Heart right ventricle (tissue), 16 donors: ENCODE measurements at regions of chr9 and their contacts with region 1.

Region 1: DNA sequence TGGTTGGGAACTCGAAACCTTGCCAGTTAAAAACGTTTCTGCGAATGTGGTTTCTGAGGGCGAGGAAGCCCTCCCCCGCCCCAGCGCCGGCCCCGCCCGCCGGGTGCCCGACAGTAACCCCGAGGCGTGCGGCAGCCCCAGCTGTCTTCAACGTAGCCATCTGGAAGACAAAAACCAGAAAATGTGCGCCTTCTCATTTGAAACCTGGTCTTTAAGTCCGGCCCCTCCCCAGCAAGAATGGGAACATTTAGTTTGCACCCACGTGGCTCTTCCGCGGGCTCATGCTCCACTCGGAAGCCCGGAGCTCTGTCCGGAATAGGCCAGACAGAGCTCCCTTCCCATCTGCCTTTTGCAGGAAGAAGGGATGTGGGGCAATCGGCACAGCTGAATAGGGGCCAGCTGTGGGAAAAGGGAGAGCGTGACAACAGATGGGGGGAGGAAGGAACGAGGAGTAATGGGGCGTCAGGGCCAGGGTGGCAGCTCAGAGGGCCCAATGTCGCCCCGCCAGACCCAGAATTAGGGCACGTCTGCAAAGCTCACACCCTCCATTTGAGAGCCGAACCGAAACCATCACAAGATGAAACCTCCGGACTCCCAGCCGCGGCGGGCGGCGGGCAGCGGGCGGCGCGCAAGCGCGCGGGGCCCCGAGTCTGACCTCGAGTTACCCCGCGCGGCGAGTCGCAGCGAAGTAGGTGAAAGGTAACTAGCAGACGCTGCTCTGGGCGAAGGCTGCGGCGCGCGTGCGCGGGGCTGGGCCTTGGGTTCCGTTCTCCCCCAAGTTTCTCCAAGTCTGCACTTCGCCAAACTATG is 63.4 kb upstream of the ABCA1 start:
- DNase-seq: peak; percentile 90 to 93
- ATAC-seq: peak; percentile 85 to 93 (median 89)
- H3K4me3 ChIP-seq: peak overlapping the region; percentile 46 to 70 (median 66)
- H3K27ac ChIP-seq: peak overlapping the region; percentile 87 to 97 (median 94)
- H3K4me1 ChIP-seq: peaks cover 19 to 58% (median 38%) of the 10 kb centered on the region in 9 donors
- H3K27me3 ChIP-seq: no peaks in the 10 kb centered on the region
- CTCF ChIP-seq: peak in 1 of 9 donors; percentile 5

Region 2: GRCh38 chr9:104345061-104345460 is 646.3 kb before region 1 on chr9:
- intact Hi-C with region 1: no loop called
- DNase-seq: no peak
- ATAC-seq: no peak
- H3K4me3 ChIP-seq: no peak overlapping the region
- H3K27ac ChIP-seq: no peak overlapping the region
- H3K4me1 ChIP-seq: no peaks in the 10 kb centered on the region
- H3K27me3 ChIP-seq: no peaks in the 10 kb centered on the region
- CTCF ChIP-seq: no peak

Region 3: DNA sequence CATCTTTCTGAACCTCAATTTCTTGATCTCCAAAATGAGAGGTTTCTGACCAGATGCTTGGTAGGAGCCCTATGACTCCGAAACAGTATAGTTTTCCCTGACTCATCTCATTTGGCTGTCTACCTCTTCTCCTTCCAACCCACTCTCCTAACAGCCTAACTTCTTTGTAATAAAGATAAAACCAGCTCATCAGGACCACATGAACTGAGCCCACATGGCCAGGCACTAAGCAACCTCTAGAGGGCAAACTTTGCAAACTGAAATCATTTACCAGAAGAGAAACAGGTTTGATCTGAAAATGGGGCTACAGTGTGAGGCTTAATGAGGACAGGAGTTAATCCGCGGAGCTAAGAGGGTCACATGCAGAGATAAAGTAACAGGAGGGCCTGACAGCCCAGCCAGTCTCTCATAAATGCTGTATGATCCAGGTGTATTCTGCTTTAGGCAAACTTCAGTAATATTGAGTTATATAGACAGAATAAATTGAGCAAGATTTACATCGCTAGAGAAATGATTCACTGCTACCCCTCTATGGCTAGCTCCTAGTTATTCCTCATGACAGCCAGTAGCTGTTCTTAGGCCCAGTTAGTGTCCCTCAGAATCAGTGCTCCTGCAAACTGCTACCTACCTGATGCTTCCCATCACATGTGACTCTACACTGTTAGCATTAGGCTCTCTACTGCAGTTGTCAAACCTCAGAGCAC is 128.0 kb before region 1 on chr9:
- intact Hi-C with region 1: loop called in 1 of 10 experiments (anchors 5 kb)
- DNase-seq: peak in 1 of 2 donors; percentile 50
- ATAC-seq: peak; percentile 63 to 75 (median 73)
- H3K4me3 ChIP-seq: no peak overlapping the region
- H3K27ac ChIP-seq: peak overlapping the region in 4 of 10 donors; percentile 10 to 66 (median 34)
- H3K4me1 ChIP-seq: peaks cover 6 to 82% (median 35%) of the 10 kb centered on the region in 9 donors
- H3K27me3 ChIP-seq: no peaks in the 10 kb centered on the region
- CTCF ChIP-seq: peak; percentile 38 to 89 (median 77)

Region 4: DNA sequence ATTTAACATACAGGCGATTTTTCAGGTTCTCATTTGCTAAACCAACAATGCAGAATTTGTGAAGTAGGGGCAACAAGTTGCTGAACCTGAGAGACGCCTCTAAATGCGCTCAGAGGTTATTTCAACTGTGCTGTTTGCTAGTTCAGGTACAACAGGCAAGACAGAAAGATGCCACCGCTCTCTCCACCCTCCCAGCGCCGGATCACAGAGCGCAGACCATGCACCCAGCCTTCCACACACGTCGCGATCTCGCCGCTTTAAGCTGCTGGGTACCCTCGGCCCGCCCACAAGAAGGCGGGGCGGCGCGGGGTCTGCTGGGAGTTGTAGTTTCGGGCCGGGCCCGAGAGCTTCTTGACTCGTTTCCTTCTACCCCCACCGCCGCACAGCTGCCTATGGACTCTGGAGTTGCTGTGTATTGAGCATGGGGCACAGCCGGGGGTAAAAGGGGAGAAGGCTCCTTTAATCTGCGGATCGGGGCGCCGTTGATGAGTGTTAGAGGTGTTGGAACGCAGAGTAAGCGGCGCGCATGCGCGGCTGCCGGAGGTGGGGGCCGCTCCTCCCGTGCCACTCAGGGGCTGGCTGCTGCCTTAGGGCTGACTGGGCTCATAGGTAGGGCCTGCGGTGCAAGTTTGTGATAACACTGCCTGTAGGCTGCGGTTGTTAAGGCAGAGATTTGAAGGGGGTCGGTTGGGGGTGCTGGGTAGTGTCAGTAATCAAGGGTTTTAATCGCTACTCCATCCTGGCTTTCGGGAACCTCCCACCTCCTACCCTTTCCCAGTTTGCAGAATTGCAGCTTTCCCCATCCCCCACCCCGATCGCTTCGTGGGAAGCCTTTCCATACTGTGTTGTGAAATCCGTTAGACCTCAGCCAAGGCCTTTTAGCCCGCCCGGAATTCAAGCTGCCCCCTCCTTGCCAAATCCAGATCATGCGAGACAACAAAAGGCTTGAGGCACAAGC is 23.0 kb before region 1 on chr9:
- intact Hi-C with region 1: loop called in 2 of 10 experiments (anchors 1 to 2 kb)
- DNase-seq: peak; percentile 89 to 90
- ATAC-seq: peak; percentile 95 to 98 (median 97)
- H3K4me3 ChIP-seq: peak overlapping the region; percentile 65 to 93 (median 75)
- H3K27ac ChIP-seq: peak overlapping the region; percentile 84 to 98 (median 92)
- H3K4me1 ChIP-seq: peaks cover 0 to 25% (median 9%) of the 10 kb centered on the region in 9 donors
- H3K27me3 ChIP-seq: no peaks in the 10 kb centered on the region
- CTCF ChIP-seq: no peak

Region 5: DNA sequence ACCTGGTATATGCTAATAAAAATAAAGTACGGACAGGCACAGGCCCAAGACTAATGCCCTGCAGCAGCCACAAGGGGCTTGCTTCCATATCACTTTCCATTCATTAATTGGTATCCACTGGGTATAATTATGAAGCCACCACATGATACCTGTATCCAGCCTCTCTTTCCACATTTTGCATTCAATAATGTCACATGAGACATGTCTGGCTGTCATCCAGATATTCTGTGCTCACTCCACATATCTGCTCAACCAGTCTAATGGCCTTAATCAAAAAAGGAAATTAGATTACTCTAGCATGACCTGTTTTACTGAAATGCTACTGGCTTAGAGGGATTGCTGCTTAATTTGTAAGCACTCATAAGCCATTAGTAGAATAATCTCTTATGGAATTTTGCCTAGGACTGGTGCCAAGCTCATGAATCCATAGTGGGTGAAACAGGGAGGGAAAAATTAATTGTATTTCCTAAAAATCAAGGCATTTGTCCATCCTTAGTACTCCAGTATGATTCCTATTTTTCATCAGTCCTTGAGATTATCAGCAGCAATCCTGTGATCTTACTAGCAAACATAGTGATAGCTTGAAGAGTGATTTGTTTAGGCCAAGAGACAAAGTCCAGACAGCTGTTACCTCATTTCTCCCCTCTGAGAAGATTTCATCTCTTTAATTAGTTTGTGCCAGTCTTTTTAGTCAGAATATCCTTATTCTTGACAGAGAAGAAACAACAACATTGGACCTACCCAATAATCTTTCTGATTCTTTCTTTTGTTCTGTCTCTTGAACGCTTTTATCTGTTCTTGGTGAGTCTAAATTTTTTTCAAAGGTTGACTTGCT is 55.8 kb after region 1 on chr9:
- intact Hi-C with region 1: loop called in 1 of 10 experiments (anchors 10 kb)
- DNase-seq: no peak
- ATAC-seq: peak in 1 of 8 donors; percentile 18
- H3K4me3 ChIP-seq: no peak overlapping the region
- H3K27ac ChIP-seq: no peak overlapping the region
- H3K4me1 ChIP-seq: peaks cover 0 to 33% (median 9%) of the 10 kb centered on the region in 9 donors
- H3K27me3 ChIP-seq: no peaks in the 10 kb centered on the region
- CTCF ChIP-seq: no peak

Region 6: DNA sequence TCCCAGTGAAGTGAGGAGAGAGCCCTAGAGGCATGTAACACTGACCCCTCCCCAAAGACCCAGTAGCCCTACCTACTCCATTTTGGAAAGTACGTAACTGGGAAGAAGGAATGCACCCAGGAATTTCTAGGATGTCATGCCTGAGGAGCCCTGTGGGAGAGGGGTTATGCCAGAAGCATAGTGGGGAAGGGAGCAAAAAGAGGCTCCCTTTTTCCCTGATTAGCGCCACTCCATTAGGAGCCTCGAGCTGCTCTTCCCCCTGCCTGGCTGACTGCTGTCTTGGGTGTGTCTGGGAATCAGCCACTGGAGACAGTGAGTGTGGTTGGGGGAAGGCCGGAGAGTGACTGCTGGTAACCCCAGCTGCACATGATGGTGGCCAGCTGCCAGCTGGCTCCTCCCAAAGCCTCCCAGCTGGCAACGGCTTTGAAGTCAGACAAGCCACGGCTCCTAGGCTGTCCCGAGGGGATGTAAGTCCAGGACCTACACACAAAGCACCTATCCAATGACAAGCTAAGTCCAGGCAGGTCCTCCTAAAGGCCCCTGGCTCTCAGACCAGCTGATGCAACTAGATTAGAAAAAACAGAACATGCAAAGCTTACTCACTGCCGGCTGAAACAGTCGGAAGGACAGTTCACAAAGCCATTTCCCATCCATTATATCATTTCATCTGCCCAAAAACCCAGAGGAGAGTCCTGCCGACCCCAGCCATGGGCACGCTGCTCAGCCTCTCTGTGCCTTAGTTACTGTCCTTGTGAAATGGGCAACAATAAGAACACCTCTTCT is 73.2 kb after region 1 on chr9:
- intact Hi-C with region 1: loop called in 3 of 10 experiments (anchors 2 to 10 kb)
- DNase-seq: peak; percentile 89 to 90
- ATAC-seq: peak; percentile 96 to 98 (median 97)
- H3K4me3 ChIP-seq: peak overlapping the region in 4 of 10 donors; percentile 3 to 26 (median 14)
- H3K27ac ChIP-seq: peak overlapping the region; percentile 10 to 93 (median 76)
- H3K4me1 ChIP-seq: peaks cover 11 to 54% (median 24%) of the 10 kb centered on the region in 9 donors
- H3K27me3 ChIP-seq: no peaks in the 10 kb centered on the region
- CTCF ChIP-seq: peak in 2 of 9 donors; percentile 9 to 11